GM12878 (cell line): ENCODE measurements at regions of chr1 and their contacts with region 1.

Region 1: GRCh38 chr1:219990782-219991510 is 55.4 kb downstream of the EPRS1 start:
- DNase-seq: no peak
- ATAC-seq: no peak
- H3K4me3 ChIP-seq: no peak overlapping the region
- H3K27ac ChIP-seq: no peak overlapping the region
- H3K4me1 ChIP-seq: peaks cover 4% of the 10 kb centered on the region
- H3K27me3 ChIP-seq: no peaks in the 10 kb centered on the region
- CTCF ChIP-seq: peak; percentile 46 to 55 (median 52); a peak in 5 of 6 replicates
- EP300 ChIP-seq: no peak
- POLR2A ChIP-seq: no peak
- RAD21 ChIP-seq: peak; percentile 62

Region 2: GRCh38 chr1:219699870-219700269 is 291.1 kb before region 1 on chr1:
- CTCF ChIA-PET with region 1: no interaction called
- POLR2A ChIA-PET with region 1: no interaction called
- RAD21 ChIA-PET with region 1: no interaction called
- SMC1A ChIA-PET with region 1: no interaction called
- in situ Hi-C with region 1: no loop called
- intact Hi-C with region 1: no loop called
- DNase-seq: no peak
- ATAC-seq: no peak
- H3K4me3 ChIP-seq: no peak overlapping the region
- H3K27ac ChIP-seq: no peak overlapping the region
- H3K4me1 ChIP-seq: no peaks in the 10 kb centered on the region
- H3K27me3 ChIP-seq: peaks cover 0 to 3% of the 10 kb centered on the region in 2 experiments; a peak in 1 of 4 replicates
- CTCF ChIP-seq: no peak
- EP300 ChIP-seq: no peak
- POLR2A ChIP-seq: no peak
- RAD21 ChIP-seq: no peak

Region 3: DNA sequence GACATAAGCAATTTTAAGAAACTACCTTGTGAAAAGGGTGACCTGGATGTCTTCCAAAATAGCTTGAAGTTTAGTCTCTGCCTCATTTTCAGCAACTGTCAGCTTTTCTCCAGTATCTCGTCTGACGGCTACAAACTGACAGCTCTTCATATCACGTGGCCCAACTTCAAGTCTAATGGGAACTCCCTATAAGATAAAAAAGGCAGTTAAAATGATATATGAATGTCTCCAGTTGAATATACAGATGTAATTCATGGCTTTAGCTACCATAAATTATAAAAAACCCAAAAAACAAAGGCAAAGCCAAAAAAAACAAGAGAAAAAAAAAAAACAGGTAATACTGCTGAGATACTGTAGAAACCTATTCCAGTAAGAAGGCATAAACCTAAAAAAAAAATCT is 17.7 kb before region 1 on chr1:
- CTCF ChIA-PET with region 1: interaction called, 11 read pairs
- POLR2A ChIA-PET with region 1: interaction called, 5 read pairs
- RAD21 ChIA-PET with region 1: interaction called, 3 read pairs
- SMC1A ChIA-PET with region 1: interaction called, 22 read pairs
- in situ Hi-C with region 1: no loop called
- intact Hi-C with region 1: no loop called
- DNase-seq: no peak
- ATAC-seq: no peak
- H3K4me3 ChIP-seq: no peak overlapping the region
- H3K27ac ChIP-seq: no peak overlapping the region
- H3K4me1 ChIP-seq: no peaks in the 10 kb centered on the region
- H3K27me3 ChIP-seq: no peaks in the 10 kb centered on the region
- CTCF ChIP-seq: no peak
- EP300 ChIP-seq: no peak
- POLR2A ChIP-seq: no peak
- RAD21 ChIP-seq: no peak

Region 4: DNA sequence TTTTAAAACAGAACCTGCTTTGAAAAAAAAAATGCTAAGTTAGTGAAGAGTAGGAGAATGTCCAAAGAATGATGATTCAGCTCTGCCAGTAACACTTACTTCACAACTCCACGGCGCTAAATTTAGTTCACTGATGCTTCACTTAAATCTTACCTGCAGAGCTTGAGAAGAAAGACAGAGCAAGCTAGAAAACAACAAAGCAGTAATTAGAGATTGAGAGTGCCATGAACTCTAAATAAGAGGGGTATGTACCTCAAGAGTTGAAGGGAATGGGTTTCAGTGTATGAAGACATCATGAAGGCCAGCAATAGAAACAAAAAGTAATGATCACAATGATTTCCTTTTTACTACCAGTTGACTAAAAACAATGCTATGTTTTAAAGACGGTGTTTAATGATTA is 22.6 kb after region 1 on chr1:
- CTCF ChIA-PET with region 1: interaction called, 14 read pairs
- POLR2A ChIA-PET with region 1: no interaction called
- RAD21 ChIA-PET with region 1: interaction called, 6 read pairs
- SMC1A ChIA-PET with region 1: interaction called, 10 read pairs
- in situ Hi-C with region 1: no loop called
- intact Hi-C with region 1: no loop called
- DNase-seq: no peak
- ATAC-seq: no peak
- H3K4me3 ChIP-seq: no peak overlapping the region
- H3K27ac ChIP-seq: no peak overlapping the region
- H3K4me1 ChIP-seq: no peaks in the 10 kb centered on the region
- H3K27me3 ChIP-seq: no peaks in the 10 kb centered on the region
- CTCF ChIP-seq: no peak
- EP300 ChIP-seq: no peak
- POLR2A ChIP-seq: no peak
- RAD21 ChIP-seq: no peak

Region 5: GRCh38 chr1:220084460-220084859 is 93.5 kb after region 1 on chr1:
- CTCF ChIA-PET with region 1: interaction called, 24 read pairs
- POLR2A ChIA-PET with region 1: interaction called, 3 read pairs
- RAD21 ChIA-PET with region 1: interaction called, 6 read pairs
- SMC1A ChIA-PET with region 1: interaction called, 7 read pairs
- in situ Hi-C with region 1: no loop called
- intact Hi-C with region 1: loop called (anchors 10 kb)
- DNase-seq: no peak
- ATAC-seq: no peak
- H3K4me3 ChIP-seq: no peak overlapping the region
- H3K27ac ChIP-seq: no peak overlapping the region
- H3K4me1 ChIP-seq: no peaks in the 10 kb centered on the region; the same call in 1 of the 2 replicates
- H3K27me3 ChIP-seq: no peaks in the 10 kb centered on the region
- CTCF ChIP-seq: no peak
- EP300 ChIP-seq: no peak
- POLR2A ChIP-seq: no peak
- RAD21 ChIP-seq: no peak

Region 6: DNA sequence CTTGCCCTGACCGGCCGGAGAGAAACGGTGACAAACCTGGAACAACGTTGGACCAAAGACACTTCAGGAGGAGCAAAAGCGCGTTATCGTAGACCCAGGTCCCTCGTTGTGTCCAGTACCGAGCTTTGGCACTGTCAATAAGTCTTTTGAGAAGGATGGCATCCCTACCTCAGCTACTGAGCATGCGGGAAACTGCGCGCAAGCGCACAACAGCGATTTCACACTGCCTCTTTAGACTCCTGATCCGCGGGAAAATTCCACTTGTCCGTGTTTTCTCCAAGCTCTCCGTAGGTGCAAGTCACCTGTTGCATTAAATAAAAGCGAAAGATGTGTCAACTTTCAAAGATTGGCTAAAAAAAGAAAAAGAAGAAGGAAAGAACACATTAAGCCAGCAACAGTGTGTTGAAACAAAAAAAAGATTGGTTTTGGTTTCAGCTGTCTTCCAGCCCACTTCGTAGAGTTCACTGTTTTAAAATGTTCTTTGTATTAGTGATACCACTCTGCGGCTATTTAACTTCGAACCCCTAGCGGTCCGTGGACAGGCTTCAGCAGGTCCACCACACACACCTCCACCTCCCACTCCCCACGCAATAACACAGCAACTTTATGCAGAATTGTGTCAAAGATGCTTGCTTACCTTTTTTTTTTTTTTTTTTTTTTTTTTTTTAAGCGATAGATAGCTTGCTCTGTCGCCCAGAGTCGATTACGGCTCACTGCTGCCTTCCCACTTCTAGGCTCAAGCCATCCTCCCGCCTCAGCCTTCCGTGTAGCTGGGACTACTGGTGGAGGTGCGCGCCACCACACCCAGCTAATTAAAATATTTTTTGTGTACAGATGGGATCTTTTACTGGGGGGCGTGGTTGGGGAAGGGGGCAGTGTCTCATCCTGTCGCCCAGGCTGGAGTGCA is 99.0 kb after region 1 on chr1 and contains the start of gene BPNT1:
- CTCF ChIA-PET with region 1: interaction called, 24 read pairs
- POLR2A ChIA-PET with region 1: interaction called, 4 read pairs
- RAD21 ChIA-PET with region 1: interaction called, 6 read pairs
- SMC1A ChIA-PET with region 1: interaction called, 7 read pairs
- in situ Hi-C with region 1: no loop called
- intact Hi-C with region 1: loop called (anchors 10 kb)
- DNase-seq: peak; percentile 100
- ATAC-seq: peak; percentile 81
- H3K4me3 ChIP-seq: peak within 1 kb of the TSS; percentile 73
- H3K27ac ChIP-seq: peak within 1 kb of the TSS; percentile 63
- H3K4me1 ChIP-seq: peaks cover 9% of the 10 kb centered on the region; the same call in 1 of the 2 replicates
- H3K27me3 ChIP-seq: no peaks in the 10 kb centered on the region
- CTCF ChIP-seq: no peak
- EP300 ChIP-seq: no peak
- POLR2A ChIP-seq: peak; percentile 86
- RAD21 ChIP-seq: no peak
- polyA plus RNA-seq, gene BPNT1: 55.9 to 78.4 TPM

Region 7: DNA sequence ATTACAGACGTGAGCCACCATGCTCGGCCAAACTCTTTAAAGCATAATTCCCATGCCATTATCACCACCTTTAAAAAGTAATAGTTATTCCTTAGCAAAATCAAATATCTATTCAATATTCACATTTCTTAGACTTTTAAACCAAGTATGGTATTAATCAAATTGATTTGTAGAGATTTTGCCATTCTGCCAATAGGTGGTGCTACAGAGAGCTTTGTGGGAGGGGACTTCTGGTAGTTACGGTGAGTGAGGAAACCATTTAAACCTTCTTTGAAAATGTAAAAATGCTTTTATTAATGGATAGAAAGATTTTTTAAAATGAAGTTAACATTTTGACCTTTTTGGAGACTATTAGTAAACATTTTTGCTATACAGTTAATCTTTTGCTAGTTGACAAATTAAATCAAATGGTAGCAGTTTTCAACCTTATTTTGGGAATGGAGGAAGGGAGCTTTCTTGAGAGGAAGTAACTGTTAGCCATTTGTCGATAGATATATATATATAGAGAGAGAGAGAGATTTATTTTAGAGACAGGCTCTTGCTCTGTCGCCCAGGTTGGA is 122.3 kb after region 1 on chr1:
- CTCF ChIA-PET with region 1: interaction called, 19 read pairs
- POLR2A ChIA-PET with region 1: interaction called, 3 read pairs
- RAD21 ChIA-PET with region 1: no interaction called
- SMC1A ChIA-PET with region 1: no interaction called
- in situ Hi-C with region 1: no loop called
- intact Hi-C with region 1: no loop called
- DNase-seq: no peak
- ATAC-seq: peak; percentile 91
- H3K4me3 ChIP-seq: no peak overlapping the region
- H3K27ac ChIP-seq: no peak overlapping the region
- H3K4me1 ChIP-seq: no peaks in the 10 kb centered on the region
- H3K27me3 ChIP-seq: no peaks in the 10 kb centered on the region
- CTCF ChIP-seq: peak; percentile 42 to 58 (median 52); a peak in 4 of 6 replicates
- EP300 ChIP-seq: no peak
- POLR2A ChIP-seq: no peak
- RAD21 ChIP-seq: 0 out of 2 replicates have a peak, but pooled peaks have one; percentile 5

Region 8: DNA sequence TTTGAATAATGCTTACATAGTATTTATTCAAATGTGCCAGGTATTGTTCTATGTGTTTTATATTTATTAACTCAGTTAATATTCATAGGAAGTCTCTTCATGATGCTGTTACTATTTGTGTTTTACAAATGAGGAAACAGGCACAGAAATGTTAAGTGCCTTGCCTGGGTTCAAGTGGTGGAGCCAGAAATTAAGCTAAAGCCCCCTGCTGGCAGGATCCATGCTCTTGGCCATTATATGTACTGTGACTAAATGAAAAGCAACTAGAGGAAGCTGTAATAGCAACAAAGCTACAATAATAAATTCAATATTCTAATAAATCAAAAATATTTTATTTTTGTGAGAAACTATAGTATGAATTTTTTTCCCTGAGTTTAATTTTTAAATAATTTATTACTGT is 132.9 kb after region 1 on chr1:
- CTCF ChIA-PET with region 1: interaction called, 13 read pairs
- POLR2A ChIA-PET with region 1: no interaction called
- RAD21 ChIA-PET with region 1: interaction called, 4 read pairs
- SMC1A ChIA-PET with region 1: interaction called, 9 read pairs
- in situ Hi-C with region 1: no loop called
- intact Hi-C with region 1: loop called (anchors 5 kb)
- DNase-seq: no peak
- ATAC-seq: peak; percentile 75
- H3K4me3 ChIP-seq: no peak overlapping the region
- H3K27ac ChIP-seq: no peak overlapping the region
- H3K4me1 ChIP-seq: no peaks in the 10 kb centered on the region
- H3K27me3 ChIP-seq: no peaks in the 10 kb centered on the region
- CTCF ChIP-seq: peak; percentile 6 to 33 (median 27); a peak in 3 of 6 replicates
- EP300 ChIP-seq: no peak
- POLR2A ChIP-seq: no peak
- RAD21 ChIP-seq: 0 out of 2 replicates have a peak, but pooled peaks have one; percentile 4